ENCODE measurements at regions of chr2 and their contacts with region 1.

Region 1: GRCh38 chr2:162073888-162074645 is at the start of gene DPP4:
- DNase-seq: peak; percentile 60
- H3K4me3 Mint-ChIP-seq: peak within 1 kb of the TSS; percentile 94
- H3K27ac Mint-ChIP-seq: peak within 1 kb of the TSS; percentile 79
- H3K4me1 Mint-ChIP-seq: peaks cover 48% of the 10 kb centered on the region
- H3K27me3 Mint-ChIP-seq: no peaks in the 10 kb centered on the region
- total RNA-seq, gene DPP4: 11.9 to 12.9 TPM

Region 2: DNA sequence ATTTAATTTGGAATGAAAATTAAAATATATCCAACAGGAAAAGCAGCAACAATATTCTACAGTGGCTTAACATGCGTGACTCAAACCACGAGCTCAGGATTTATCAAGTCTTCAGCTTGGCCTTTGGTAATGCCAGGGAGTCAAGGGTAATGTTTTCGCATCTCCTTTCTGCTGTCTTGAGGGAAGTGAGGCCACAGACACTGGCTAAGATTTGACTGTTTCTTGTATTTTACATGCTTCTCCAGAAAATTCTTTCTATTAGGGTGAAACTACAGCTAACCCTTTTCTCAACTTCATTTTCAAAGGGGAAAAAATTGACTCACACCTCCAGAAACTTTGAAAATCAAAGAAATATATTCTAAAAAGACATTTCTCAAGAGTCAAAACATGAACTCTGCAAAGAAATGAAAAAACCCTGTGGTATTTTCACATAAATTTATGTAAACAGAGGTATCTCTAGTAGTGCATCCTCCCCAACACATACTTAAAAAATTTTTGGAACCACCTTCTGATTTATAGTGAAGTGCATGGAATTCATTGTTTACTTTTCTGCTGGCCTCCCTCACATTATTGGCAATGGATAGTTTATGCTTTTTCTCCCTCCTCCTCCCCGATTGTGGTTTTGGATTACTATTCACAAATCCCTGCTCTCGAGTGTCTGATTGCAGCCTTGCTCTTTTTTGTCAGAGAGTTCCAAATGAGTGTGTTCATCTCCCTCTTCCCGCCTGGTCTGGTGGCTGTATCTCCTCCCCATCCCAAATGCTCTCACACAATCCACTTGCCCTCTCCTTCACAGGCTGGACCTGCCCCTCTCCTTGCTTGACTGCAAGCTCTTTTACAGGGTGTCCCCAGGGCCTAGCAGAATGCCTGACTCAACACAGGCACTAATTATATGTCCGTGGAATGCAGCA is 48.7 kb before region 1 on chr2:
- CTCF ChIA-PET with region 1: interaction called, 3 read pairs
- intact Hi-C with region 1: loop called (anchors 1 kb)
- DNase-seq: peak; percentile 32
- H3K4me3 Mint-ChIP-seq: no peak overlapping the region
- H3K27ac Mint-ChIP-seq: no peak overlapping the region
- H3K4me1 Mint-ChIP-seq: peaks cover 63% of the 10 kb centered on the region
- H3K27me3 Mint-ChIP-seq: no peaks in the 10 kb centered on the region

Region 3: GRCh38 chr2:162938387-162938786 is 864.3 kb after region 1 on chr2:
- CTCF ChIA-PET with region 1: no interaction called
- intact Hi-C with region 1: no loop called
- DNase-seq: no peak
- H3K4me3 Mint-ChIP-seq: no peak overlapping the region
- H3K27ac Mint-ChIP-seq: no peak overlapping the region
- H3K4me1 Mint-ChIP-seq: no peaks in the 10 kb centered on the region
- H3K27me3 Mint-ChIP-seq: no peaks in the 10 kb centered on the region